Ovary (tissue), 10 donors: ENCODE measurements at regions of chr10 and their contacts with region 1.

Region 1: GRCh38 chr10:13787015-13787421 is 200.3 kb downstream of the PRPF18 start:
- DNase-seq: no peak
- H3K4me3 ChIP-seq: no peak overlapping the region
- H3K27ac ChIP-seq: no peak overlapping the region
- H3K4me1 ChIP-seq: peaks cover 3% of the 10 kb centered on the region
- H3K27me3 ChIP-seq: no peaks in the 10 kb centered on the region
- CTCF ChIP-seq: no peak
- EP300 ChIP-seq: no peak
- POLR2A ChIP-seq: no peak

Region 2: DNA sequence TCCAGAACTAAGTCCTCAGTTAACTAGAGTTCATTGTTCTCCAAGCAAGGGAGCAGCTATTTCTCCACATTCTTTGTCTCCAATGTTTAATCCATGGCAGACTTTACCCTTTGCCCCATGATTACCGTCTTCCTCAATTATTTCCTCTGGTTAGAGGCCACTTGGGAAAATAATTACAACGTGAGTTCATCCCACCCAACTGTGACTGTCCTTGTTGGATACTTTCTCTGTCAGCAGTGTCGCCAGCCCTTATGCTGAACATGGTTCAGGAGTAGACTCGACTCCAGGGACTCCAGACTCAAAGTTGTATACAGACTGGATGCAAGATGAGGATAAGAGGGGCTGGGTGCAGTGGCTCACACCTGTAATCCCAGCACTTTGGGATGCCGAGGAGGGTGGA is 421.8 kb before region 1 on chr10:
- intact Hi-C with region 1: loop called in 1 of 4 experiments (anchors 5 kb)
- DNase-seq: no peak
- H3K4me3 ChIP-seq: no peak overlapping the region
- H3K27ac ChIP-seq: no peak overlapping the region
- H3K4me1 ChIP-seq: no peaks in the 10 kb centered on the region
- H3K27me3 ChIP-seq: no peaks in the 10 kb centered on the region
- CTCF ChIP-seq: no peak
- EP300 ChIP-seq: no peak
- POLR2A ChIP-seq: no peak

Region 3: DNA sequence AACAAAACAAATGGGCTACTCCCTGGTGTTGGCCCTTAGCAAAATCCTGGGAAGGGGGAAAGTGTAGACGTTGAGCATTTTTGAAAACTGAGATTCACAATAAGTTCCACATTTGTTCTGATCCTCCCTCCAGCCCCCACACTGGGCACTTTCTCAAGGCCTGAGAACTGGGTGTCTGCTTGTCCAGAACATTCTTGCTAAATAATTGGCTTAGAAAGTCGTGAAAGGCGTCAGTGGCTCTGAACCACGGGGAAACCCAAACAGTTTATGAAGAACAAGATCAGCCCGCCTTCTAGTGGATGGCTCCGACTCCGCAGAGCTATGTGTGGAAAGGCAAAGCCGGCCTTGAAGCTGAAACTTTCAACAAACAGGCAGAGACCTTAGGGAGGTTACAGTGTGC is 169.8 kb after region 1 on chr10:
- intact Hi-C with region 1: loop called in 3 of 4 experiments (anchors 1 to 10 kb)
- DNase-seq: peak; percentile 49 to 85 (median 73)
- H3K4me3 ChIP-seq: no peak overlapping the region
- H3K27ac ChIP-seq: peak overlapping the region in 1 of 2 donors; percentile 56
- H3K4me1 ChIP-seq: peaks cover 7% of the 10 kb centered on the region
- H3K27me3 ChIP-seq: no peaks in the 10 kb centered on the region
- CTCF ChIP-seq: peak in 2 of 3 donors; percentile 29 to 36
- EP300 ChIP-seq: no peak
- POLR2A ChIP-seq: no peak

Region 4: DNA sequence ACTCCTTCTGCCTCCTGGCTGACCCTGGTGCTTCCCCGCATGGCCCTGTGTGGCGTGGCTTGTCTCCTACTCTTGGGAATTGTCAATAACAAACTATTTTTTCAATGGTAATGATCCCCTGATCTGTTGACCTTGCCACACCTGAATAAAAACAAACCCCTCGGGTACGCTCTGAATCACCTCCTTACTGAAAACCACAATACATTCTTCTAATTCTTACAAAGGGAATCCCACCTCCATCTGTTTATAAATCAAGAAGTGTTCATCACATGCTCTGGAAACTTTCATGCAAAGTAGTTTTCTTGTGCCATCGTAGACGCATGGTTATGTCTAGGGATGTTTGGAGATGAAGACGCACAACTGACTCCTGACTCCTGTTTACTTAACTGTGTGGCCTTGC is 297.9 kb after region 1 on chr10:
- intact Hi-C with region 1: loop called in 3 of 4 experiments (anchors 5 to 10 kb)
- DNase-seq: no peak
- H3K4me3 ChIP-seq: no peak overlapping the region
- H3K27ac ChIP-seq: no peak overlapping the region
- H3K4me1 ChIP-seq: peaks cover 2% of the 10 kb centered on the region
- H3K27me3 ChIP-seq: no peaks in the 10 kb centered on the region
- CTCF ChIP-seq: no peak
- EP300 ChIP-seq: no peak
- POLR2A ChIP-seq: no peak

Region 5: DNA sequence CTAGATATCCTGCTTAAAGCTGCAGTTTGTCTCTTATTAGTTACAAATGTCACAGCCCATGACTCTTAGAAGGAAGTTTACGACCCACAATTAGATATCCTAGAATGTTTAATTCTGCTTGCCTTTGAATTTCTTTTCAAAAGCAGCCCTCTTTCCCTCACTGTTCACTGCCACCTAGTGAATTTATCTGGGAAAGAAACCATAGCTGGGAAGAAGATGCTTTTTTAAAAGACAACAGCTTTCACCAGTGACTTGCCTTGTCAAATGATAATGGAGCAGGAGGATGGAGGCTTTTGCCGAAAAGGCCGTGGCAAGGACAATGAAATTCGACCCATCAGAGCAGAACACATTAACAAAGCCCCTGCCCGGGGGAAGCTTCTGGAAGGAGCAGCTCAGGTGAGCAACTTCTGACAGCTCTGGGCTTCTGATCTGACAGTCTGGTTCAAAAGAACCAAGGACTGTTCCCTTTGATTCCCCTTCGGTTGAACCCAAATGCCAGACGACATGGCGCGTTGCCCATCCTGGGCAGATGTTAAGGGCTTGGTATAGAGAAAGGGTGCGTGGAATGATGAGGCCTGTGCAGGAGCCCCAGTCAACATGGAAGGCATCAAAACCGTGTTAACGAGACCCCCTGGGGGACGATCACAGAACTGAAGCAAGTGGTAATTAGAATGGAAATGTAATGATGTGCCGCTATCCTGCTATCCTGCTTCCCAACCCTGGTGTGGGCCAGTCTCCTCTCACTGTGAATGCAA is 306.9 kb after region 1 on chr10:
- intact Hi-C with region 1: loop called in 3 of 4 experiments (anchors 5 to 10 kb)
- DNase-seq: no peak
- H3K4me3 ChIP-seq: no peak overlapping the region
- H3K27ac ChIP-seq: no peak overlapping the region
- H3K4me1 ChIP-seq: peaks cover 2% of the 10 kb centered on the region
- H3K27me3 ChIP-seq: no peaks in the 10 kb centered on the region
- CTCF ChIP-seq: no peak
- EP300 ChIP-seq: no peak
- POLR2A ChIP-seq: no peak

Region 6: DNA sequence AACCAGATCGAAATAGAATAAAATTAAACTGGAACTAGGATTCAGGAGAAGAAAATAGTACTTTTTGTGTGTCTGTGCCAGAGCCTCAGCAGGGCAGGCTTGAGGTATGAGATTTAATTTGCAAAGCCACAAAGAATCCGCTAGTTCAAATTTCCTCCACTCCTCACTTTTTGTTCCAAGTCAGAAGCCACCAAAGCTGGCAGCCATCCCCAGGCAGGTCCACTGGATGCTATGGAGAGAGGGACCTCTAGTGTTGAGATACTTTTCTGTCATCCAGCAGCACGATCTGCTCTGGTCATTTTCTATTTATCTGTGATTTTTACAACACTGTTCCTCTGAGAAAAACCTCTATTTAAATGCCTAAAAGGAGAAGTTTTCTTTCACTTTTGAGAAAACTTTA is 691.6 kb after region 1 on chr10:
- intact Hi-C with region 1: loop called in 1 of 4 experiments (anchors 10 kb)
- DNase-seq: peak; percentile 41 to 78 (median 55)
- H3K4me3 ChIP-seq: no peak overlapping the region
- H3K27ac ChIP-seq: no peak overlapping the region
- H3K4me1 ChIP-seq: no peaks in the 10 kb centered on the region
- H3K27me3 ChIP-seq: no peaks in the 10 kb centered on the region
- CTCF ChIP-seq: peak in 1 of 3 donors; percentile 31
- EP300 ChIP-seq: no peak
- POLR2A ChIP-seq: no peak